SK-N-SH (cell line): ENCODE measurements at regions of chr5 and their contacts with region 1.

Region 1: DNA sequence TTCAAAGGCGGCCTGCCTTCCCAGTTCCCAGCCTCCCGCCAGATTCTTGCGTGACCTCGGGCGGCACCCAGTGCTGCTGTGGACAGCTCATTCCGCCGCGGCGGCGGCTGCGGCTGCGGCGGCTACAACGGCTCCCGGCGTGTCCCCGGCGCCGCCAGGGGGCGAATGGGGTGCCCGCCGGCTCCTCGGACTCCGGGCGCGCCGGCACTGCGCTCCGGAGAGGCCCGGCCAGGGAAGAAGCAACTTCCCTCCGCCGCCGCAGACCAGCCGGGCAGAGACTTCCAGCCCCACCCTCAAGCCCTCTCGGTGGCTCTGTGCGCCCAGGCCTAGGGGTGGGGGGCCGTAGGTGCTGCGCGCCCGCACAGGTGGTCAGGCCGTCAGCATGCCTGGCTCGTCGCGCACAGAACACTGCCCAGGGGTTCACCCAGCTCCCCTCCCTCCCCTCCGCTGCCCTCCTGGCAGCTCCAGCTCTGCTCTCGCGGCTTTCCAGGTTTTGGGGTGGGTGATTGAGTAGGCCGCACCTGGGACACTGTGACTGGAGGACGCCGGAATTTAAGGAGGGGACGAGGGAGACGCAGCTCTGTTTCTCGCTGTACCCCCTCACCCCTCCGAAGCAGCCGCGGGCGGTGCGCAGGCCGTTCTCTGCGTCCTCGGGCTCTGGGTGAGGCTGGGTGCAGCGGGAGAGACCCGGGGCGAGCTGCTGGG is 20.2 kb downstream of the IGIP start:
- DNase-seq: peak; percentile 90
- H3K4me3 ChIP-seq: peak overlapping the region; percentile 32 to 43
- H3K27ac ChIP-seq: no peak overlapping the region
- H3K4me1 ChIP-seq: peaks cover 0 to 8% of the 10 kb centered on the region in 2 experiments; a peak in 1 of 4 replicates
- H3K27me3 ChIP-seq: no peaks in the 10 kb centered on the region
- CTCF ChIP-seq: peak; percentile 67
- EP300 ChIP-seq: peak in 1 of 2 experiments; percentile 44; a peak in 1 of 4 replicates
- RAD21 ChIP-seq: peak; percentile 32; the same call in 1 of the 2 replicates

Region 2: DNA sequence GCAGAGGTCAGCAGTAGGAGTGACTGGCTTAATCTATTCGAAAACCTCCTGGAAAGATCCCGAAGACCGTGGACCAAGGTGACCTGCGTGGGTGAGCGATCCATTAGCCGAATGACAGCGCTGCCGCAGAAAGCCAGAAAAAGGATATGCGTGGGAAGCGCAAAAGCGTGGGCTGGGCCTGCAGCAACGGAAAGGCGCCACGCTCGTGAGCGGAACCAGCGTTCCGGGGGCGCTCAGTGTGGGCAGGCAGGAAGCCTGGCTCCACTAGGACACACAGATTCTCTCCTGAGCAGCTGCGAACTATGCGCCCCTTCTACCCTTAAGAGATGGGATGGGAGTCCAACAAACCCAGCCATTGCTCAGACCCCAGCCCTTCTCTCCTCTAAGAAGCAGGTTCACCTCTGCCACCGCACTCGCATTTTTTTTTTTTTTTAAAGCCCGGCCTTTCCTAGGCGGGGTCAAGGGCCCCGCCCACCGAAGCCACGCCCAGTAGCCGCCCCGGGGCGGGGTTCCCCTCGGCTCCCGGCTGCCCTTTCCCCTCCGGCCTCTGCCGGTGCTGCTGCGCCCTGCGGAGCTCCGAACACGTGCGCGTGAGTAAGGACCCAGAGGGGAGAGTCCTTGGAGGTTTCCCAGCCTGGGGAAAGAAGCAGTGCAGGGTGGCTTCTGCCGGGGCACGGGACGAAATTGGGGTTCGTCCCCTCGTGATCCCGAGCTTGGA is 872.2 kb before region 1 on chr5:
- CTCF ChIA-PET with region 1: no interaction called
- POLR2A ChIA-PET with region 1: no interaction called
- DNase-seq: peak; percentile 97
- H3K4me3 ChIP-seq: peak overlapping the region; percentile 61 to 69
- H3K27ac ChIP-seq: peak overlapping the region; percentile 63 to 64; a peak in 3 of 4 replicates
- H3K4me1 ChIP-seq: peaks cover 20 to 26% of the 10 kb centered on the region in 2 experiments; a peak in 2 of 4 replicates
- H3K27me3 ChIP-seq: no peaks in the 10 kb centered on the region
- CTCF ChIP-seq: 0 out of 2 replicates have a peak, but pooled peaks have one; percentile 6
- EP300 ChIP-seq: no peak
- RAD21 ChIP-seq: no peak

Region 3: DNA sequence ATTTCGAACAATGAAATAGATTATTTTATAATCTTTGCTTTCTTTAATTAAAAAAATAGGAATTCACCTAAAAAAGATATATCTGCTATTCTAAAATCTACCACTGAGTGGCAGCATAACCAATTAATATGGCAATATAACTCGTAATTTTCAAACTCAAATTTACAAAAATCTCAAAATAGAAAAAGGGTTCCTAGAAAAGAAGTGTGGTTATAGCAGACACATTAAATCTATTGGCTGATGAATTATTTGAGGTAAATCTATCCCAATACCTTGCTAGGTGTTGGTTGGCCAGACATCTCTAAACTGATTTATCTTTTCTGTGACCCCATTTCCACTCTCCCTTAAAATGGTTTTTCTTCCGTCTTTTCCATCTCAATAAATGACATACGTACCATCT is 72.7 kb before region 1 on chr5:
- CTCF ChIA-PET with region 1: interaction called, 147 read pairs
- POLR2A ChIA-PET with region 1: no interaction called
- DNase-seq: peak; percentile 32
- H3K4me3 ChIP-seq: no peak overlapping the region; a peak in 1 of 4 replicates
- H3K27ac ChIP-seq: no peak overlapping the region
- H3K4me1 ChIP-seq: no peaks in the 10 kb centered on the region; a peak in 1 of 4 replicates
- H3K27me3 ChIP-seq: peaks cover 7% of the 10 kb centered on the region; the same call in 1 of the 2 replicates
- CTCF ChIP-seq: peak; percentile 82
- EP300 ChIP-seq: no peak
- RAD21 ChIP-seq: peak; percentile 64

Region 4: GRCh38 chr5:140113699-140114263 is 32.2 kb before region 1 on chr5 and contains the start of gene PURA:
- CTCF ChIA-PET with region 1: interaction called, 166 read pairs
- POLR2A ChIA-PET with region 1: interaction called, 6 read pairs
- DNase-seq: peak; percentile 98
- H3K4me3 ChIP-seq: peak within 1 kb of the TSS; percentile 73 to 75
- H3K27ac ChIP-seq: peak within 1 kb of the TSS; percentile 69 to 85
- H3K4me1 ChIP-seq: peaks cover 31 to 37% of the 10 kb centered on the region in 2 experiments; a peak in 3 of 4 replicates
- H3K27me3 ChIP-seq: no peaks in the 10 kb centered on the region
- CTCF ChIP-seq: no peak
- EP300 ChIP-seq: no peak
- RAD21 ChIP-seq: no peak
- polyA plus RNA-seq, gene PURA: 2.4 and 2.9 TPM in 2 replicates

Region 5: GRCh38 chr5:140131967-140132409 is 14.0 kb before region 1 on chr5:
- CTCF ChIA-PET with region 1: interaction called, 63 read pairs
- POLR2A ChIA-PET with region 1: no interaction called
- DNase-seq: no peak
- H3K4me3 ChIP-seq: no peak overlapping the region
- H3K27ac ChIP-seq: peak overlapping the region in 1 of 2 experiments; percentile 70; a peak in 3 of 4 replicates
- H3K4me1 ChIP-seq: peaks cover 0 to 15% of the 10 kb centered on the region in 2 experiments; a peak in 2 of 4 replicates
- H3K27me3 ChIP-seq: no peaks in the 10 kb centered on the region
- CTCF ChIP-seq: no peak
- EP300 ChIP-seq: no peak
- RAD21 ChIP-seq: no peak

Region 6: GRCh38 chr5:140169410-140169809 is 23.4 kb after region 1 on chr5:
- CTCF ChIA-PET with region 1: interaction called, 11 read pairs
- POLR2A ChIA-PET with region 1: no interaction called
- DNase-seq: no peak
- H3K4me3 ChIP-seq: no peak overlapping the region
- H3K27ac ChIP-seq: peak overlapping the region in 1 of 2 experiments; percentile 53; a peak in 1 of 4 replicates
- H3K4me1 ChIP-seq: peaks cover 5% of the 10 kb centered on the region in 2 experiments; a peak in 3 of 4 replicates
- H3K27me3 ChIP-seq: no peaks in the 10 kb centered on the region
- CTCF ChIP-seq: peak; percentile 29; the same call in 1 of the 2 replicates
- EP300 ChIP-seq: no peak
- RAD21 ChIP-seq: peak; percentile 50